HCT116 (cell line): ENCODE measurements at regions of chrX and their contacts with region 1.

Region 1: GRCh38 chrX:110847334-110847733 is 51.7 kb upstream of the CHRDL1 start:
- DNase-seq: peak; percentile 37
- ATAC-seq: peak; percentile 79
- H3K4me3 ChIP-seq: no peak overlapping the region
- H3K27ac ChIP-seq: no peak overlapping the region
- H3K4me1 ChIP-seq: peaks cover 0 to 4% of the 10 kb centered on the region in 2 experiments; a peak in 1 of 4 replicates
- H3K27me3 ChIP-seq: no peaks in the 10 kb centered on the region
- CTCF ChIP-seq: peak; percentile 37 to 48 (median 39); a peak in 4 of 6 replicates
- POLR2A ChIP-seq: no peak
- RAD21 ChIP-seq: peak; percentile 56

Region 2: GRCh38 chrX:110442640-110443039 is 404.7 kb before region 1 on chrX:
- CTCF ChIA-PET with region 1: interaction called, 20 read pairs
- POLR2A ChIA-PET with region 1: no interaction called
- RAD21 ChIA-PET with region 1: no interaction called
- intact Hi-C with region 1: no loop called
- DNase-seq: no peak
- ATAC-seq: peak; percentile 90
- H3K4me3 ChIP-seq: no peak overlapping the region
- H3K27ac ChIP-seq: no peak overlapping the region
- H3K4me1 ChIP-seq: no peaks in the 10 kb centered on the region
- H3K27me3 ChIP-seq: peaks cover 23% of the 10 kb centered on the region
- CTCF ChIP-seq: peak in 2 of 3 experiments; percentile 41 to 44; a peak in 4 of 6 replicates
- POLR2A ChIP-seq: no peak
- RAD21 ChIP-seq: peak; percentile 18; the same call in 1 of the 2 replicates

Region 3: GRCh38 chrX:110450050-110450449 is 397.3 kb before region 1 on chrX:
- CTCF ChIA-PET with region 1: interaction called, 20 read pairs
- POLR2A ChIA-PET with region 1: no interaction called
- RAD21 ChIA-PET with region 1: no interaction called
- intact Hi-C with region 1: loop called (anchors 2 kb)
- DNase-seq: peak; percentile 29
- ATAC-seq: peak; percentile 94
- H3K4me3 ChIP-seq: no peak overlapping the region
- H3K27ac ChIP-seq: no peak overlapping the region
- H3K4me1 ChIP-seq: no peaks in the 10 kb centered on the region
- H3K27me3 ChIP-seq: peaks cover 27% of the 10 kb centered on the region
- CTCF ChIP-seq: peak; percentile 41 to 65 (median 61); a peak in 5 of 6 replicates
- POLR2A ChIP-seq: no peak
- RAD21 ChIP-seq: peak; percentile 73

Region 4: DNA sequence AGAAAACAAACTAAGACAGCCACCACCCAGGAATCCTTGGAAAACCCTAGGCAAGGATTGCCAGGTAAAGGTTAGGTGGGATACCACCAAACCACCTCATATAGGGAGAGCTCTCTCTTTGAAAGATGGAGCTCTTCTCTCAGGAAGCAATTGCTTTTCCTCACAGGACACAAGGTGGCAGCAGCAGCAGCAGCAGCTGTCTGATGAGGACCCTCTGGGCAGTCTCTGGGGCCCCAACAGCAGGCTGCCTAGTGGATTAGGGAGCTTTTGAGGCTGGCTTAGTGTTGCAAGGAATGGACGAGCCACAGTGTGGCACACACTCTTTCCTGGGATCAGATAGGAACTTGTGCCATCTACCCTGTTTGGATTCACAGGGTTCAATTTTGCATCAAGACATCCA is 10.4 kb before region 1 on chrX:
- CTCF ChIA-PET with region 1: interaction called, 19 read pairs
- POLR2A ChIA-PET with region 1: no interaction called
- RAD21 ChIA-PET with region 1: no interaction called
- intact Hi-C with region 1: no loop called
- DNase-seq: no peak
- ATAC-seq: peak; percentile 42; the same call in 1 of the 2 replicates
- H3K4me3 ChIP-seq: no peak overlapping the region
- H3K27ac ChIP-seq: no peak overlapping the region
- H3K4me1 ChIP-seq: no peaks in the 10 kb centered on the region
- H3K27me3 ChIP-seq: no peaks in the 10 kb centered on the region
- CTCF ChIP-seq: peak in 2 of 3 experiments; percentile 22 to 44; a peak in 4 of 6 replicates
- POLR2A ChIP-seq: no peak
- RAD21 ChIP-seq: no peak

Region 5: GRCh38 chrX:111352424-111352823 is 505.1 kb after region 1 on chrX:
- CTCF ChIA-PET with region 1: no interaction called
- POLR2A ChIA-PET with region 1: no interaction called
- RAD21 ChIA-PET with region 1: no interaction called
- intact Hi-C with region 1: no loop called
- DNase-seq: no peak
- ATAC-seq: no peak
- H3K4me3 ChIP-seq: no peak overlapping the region
- H3K27ac ChIP-seq: no peak overlapping the region
- H3K4me1 ChIP-seq: no peaks in the 10 kb centered on the region
- H3K27me3 ChIP-seq: no peaks in the 10 kb centered on the region
- CTCF ChIP-seq: no peak
- POLR2A ChIP-seq: no peak
- RAD21 ChIP-seq: no peak